Dorsolateral prefrontal cortex (tissue), 120 donors: ENCODE measurements at regions of chr19 and their contacts with region 1.

Region 1: DNA sequence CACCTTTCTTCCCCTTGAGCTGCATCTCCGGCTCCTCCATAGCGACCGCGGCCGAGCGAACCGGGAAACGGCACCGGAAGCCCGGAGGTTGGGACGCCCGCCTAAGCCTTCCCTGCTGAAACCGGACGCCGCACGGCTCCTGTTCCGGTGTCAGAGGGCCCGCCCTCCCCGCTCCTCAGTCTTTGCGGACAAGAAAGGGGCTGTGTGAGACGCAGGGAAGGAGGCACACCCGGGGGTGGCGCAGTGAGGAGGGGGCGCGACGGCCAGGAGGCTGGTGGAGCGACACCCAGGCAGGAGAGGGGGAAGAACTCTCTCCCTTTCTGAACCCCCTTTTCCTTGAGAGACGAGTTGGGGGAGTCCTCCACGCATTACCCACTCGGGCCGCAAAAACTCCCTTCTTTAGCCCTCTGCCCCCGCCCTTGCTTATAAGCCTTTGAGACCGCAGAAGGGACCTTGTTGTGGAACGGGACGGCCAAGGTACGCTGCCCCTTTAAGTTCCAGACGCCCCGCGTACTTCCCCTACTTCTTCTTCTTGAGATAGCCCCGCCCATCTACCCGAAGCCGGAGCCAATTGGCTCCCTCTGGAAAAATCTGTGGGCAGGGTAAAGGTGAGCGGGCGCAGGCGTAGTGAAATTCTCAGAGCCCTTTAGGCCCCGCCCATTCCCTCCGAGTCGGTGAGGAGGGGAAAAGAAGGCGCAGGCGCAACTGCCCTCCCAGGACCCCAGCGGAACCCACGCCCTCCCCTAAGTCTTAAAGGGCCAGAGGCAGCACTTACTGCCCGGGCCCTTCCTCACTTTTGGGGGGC is at the starts of genes BORCS8 and RFXANK:
- DNase-seq: peak; percentile 96 to 99 (median 98)
- H3K4me3 ChIP-seq: peak within 1 kb of the TSS; percentile 66 to 100 (median 96)
- H3K27ac ChIP-seq: peak within 1 kb of the TSS; percentile 91 to 100 (median 98)
- H3K27me3 ChIP-seq: no peaks in the 10 kb centered on the region
- CTCF ChIP-seq: peak in 16 of 56 donors; percentile 1 to 32 (median 12)
- total RNA-seq, gene BORCS8: 28.1 to 68.0 (median 47.0) TPM
- total RNA-seq, gene RFXANK: 25.2 to 73.9 (median 38.1) TPM

Region 2: DNA sequence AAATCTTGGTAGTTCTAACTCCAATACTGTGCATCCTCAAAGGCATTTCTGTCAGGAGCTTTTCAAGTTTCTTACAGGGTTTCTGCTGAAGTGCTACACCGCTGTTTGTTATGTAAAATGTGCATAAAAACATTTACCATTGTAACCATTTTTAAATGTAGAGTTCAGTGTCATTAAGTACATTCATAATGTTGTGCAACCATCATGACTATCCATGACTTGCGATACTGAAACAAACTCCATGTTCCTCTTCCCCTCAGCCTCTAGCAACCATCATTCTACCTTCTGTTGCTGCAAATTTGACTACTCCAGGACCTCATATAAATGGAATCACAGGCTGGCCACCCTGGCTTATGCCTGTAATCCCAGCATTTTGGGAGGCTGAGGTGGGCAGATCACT is 142.9 kb before region 1 on chr19:
- intact Hi-C with region 1: no loop called
- DNase-seq: no peak
- H3K4me3 ChIP-seq: no peak overlapping the region
- H3K27ac ChIP-seq: no peak overlapping the region
- H3K27me3 ChIP-seq: no peaks in the 10 kb centered on the region
- CTCF ChIP-seq: no peak

Region 3: DNA sequence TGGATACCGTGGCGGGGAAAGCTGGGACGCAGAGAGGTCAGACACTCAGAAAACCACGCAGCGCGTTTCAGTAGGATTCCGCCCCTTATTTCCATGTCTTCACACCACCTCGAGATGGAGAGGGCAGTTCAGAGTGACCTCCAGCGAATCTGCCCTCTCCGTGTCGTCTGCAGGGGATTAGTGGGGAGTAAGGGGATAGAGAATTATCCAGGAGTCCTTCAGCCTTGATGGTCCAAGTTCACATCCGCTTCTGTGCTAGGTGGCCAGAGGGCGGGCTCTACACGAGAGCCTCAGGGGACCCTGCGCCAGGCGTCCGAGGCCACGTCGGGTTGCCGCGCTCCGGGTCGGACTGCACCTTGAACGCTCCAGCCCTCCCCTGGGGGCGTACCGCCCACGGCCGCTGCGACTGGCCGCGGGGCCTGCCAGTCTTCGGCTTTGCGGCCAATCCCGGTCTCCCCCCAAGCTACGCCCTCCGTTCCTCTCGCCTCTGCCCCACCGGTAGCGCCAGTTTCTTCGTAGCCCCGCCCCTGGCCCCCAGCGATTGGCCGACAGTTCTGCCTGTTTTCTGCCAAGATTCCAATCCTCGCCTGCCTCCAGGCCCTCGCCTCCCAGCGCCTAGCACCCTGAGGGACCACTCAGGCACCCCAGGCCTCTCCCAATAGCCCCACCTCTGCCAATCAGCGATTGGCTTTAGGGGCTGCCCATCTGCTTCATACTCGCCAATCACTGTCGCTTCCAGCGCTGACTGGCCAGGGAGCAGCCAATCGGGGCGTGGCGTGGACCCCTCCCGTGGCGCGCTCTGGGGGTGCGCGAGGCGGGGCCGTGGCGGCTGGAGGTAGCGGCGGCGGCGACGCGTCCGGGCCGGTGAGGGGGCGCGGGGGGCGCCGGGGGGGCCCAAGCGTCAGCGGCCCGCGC is 128.8 kb before region 1 on chr19 and contains the start of gene SLC25A42:
- intact Hi-C with region 1: loop called in 1 of 2 experiments (anchors 5 kb)
- DNase-seq: peak; percentile 98 to 100 (median 100)
- H3K4me3 ChIP-seq: peak within 1 kb of the TSS; percentile 58 to 98 (median 82)
- H3K27ac ChIP-seq: peak within 1 kb of the TSS in 57 of 59 donors; percentile 8 to 94 (median 87)
- H3K27me3 ChIP-seq: no peaks in the 10 kb centered on the region
- CTCF ChIP-seq: peak in 15 of 56 donors; percentile 4 to 39 (median 11)
- total RNA-seq, gene SLC25A42: 17.0 to 52.0 (median 27.3) TPM

Region 4: DNA sequence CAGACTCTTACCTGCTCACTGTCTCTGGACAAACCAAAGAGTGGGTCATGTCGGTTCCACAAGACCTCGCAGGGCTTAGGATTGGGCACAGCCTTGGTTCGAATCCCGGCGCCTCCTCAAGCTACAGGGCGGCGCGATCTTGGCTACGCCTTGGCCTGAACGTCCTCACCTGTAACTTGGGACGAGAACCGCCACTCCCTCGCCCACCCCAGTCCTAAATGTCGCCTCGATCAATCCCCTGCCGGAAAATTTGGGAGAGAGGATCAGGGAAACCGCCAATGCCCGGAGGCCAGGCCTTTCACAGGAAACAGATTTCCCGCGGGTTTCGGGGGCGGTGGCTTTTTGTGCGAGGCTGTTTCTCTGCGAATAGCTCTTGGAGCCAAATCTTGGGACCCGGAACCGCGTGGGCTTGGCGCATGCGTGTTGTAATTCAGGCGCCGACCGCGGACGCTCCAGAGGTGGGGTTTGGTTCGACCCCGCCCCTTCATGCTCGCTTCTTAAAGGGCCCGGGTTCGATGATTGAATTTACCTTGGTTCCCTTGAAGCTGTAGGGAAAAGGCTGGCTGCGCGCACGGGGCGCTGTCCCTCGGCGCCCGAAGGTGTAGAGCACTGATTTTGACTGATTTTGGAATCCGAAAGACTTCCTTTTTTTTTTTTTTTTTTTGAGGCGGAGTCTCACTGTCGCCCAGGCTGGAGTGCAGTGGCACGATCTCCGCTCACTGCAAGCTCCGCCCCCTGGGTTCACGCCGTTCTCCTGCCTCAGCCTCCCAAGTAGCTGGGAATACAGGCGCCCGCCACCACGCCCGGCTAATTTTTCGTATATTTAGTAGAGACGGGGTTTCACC is 11.0 kb after region 1 on chr19 and contains the start of gene NR2C2AP:
- intact Hi-C with region 1: loop called in 1 of 2 experiments (anchors 1 kb)
- DNase-seq: peak; percentile 89 to 94 (median 92)
- H3K4me3 ChIP-seq: peak within 1 kb of the TSS; percentile 52 to 89 (median 75)
- H3K27ac ChIP-seq: peak within 1 kb of the TSS in 55 of 59 donors; percentile 37 to 88 (median 75)
- H3K27me3 ChIP-seq: peaks cover 0 to 3% (median 0%) of the 10 kb centered on the region in 45 donors
- CTCF ChIP-seq: peak in 16 of 56 donors; percentile 8 to 35 (median 16)
- total RNA-seq, gene NR2C2AP: 6.3 to 17.2 (median 11.1) TPM

Region 5: DNA sequence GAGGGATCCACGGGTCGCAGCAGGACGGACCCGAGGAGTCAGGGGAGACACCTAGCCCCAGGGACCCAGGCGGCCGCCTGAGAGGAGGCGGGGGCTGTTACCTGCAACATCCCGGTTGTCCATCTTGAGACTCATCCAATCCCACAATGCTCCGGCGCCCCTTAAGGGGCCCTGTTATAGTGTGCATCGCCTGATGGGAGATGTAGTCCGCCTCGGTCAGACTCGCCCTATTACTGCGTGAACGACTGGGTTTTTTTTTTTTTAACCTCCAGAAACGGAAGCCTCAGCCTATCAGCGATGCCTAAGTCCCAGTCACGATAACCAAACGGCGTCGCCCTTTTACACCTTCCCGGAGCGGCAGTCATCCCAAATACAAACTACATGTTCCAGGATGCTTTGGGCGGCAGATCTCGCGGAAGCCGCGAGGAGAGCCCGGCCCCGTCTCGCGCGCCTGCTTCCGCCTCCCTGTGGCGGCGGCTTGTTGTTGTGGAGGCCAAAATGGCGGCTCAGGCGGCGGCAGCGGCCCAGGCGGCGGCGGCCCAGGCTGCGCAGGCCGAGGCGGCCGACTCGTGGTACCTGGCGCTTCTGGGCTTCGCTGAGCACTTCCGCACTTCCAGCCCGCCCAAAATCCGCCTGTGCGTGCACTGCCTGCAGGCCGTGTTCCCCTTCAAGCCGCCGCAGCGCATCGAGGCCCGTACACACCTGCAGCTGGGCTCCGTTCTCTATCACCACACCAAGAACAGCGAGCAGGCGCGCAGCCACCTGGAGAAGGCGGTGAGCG is 128.3 kb after region 1 on chr19 and contains the starts of genes MAU2 and SUGP1:
- intact Hi-C with region 1: loop called (anchors 2 to 5 kb)
- DNase-seq: peak; percentile 77 to 94 (median 90)
- H3K4me3 ChIP-seq: peak within 1 kb of the TSS; percentile 62 to 100 (median 97)
- H3K27ac ChIP-seq: peak within 1 kb of the TSS; percentile 53 to 99 (median 95)
- H3K27me3 ChIP-seq: no peaks in the 10 kb centered on the region
- CTCF ChIP-seq: peak in 53 of 56 donors; percentile 10 to 73 (median 52)
- total RNA-seq, gene MAU2: 58.7 to 162 (median 91.5) TPM
- total RNA-seq, gene SUGP1: 50.9 to 97.4 (median 73.0) TPM

Region 6: DNA sequence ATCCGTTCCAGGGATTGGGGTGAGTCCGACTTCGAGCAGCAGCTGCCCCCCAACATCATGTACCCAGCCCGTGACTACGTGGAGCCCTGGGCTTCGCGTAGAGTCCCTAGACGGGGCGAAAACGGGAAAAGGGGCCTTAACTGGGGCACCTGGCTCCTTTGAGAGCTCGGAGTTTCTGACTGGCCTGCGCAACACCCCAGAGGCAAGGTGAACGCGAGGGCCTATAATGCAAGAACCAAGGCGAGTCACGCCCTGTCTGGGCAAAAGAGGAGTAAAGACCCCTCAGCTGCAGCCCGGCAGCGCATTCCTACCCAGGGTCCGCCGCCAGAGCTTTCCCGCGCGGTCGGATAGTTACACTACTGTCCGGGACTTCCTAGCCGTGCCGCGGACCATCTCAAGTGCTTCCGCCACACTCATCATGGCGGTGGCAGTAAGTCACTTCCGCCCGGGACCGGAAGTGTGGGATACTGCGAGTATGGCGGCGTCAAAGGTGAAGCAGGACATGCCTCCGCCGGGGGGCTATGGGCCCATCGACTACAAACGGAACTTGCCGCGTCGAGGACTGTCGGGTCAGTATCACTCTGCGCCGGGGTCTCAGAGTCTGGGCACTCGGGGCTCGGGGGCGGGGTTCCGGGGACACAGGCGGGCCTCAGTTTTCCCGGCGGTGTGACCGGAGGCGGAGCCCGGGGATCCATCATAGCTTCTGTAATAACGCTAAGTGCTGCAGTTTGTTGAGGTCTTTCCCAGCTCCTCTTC is 323.7 kb after region 1 on chr19 and contains the start of gene NDUFA13:
- intact Hi-C with region 1: loop called in 1 of 2 experiments (anchors 5 kb)
- DNase-seq: peak; percentile 87 to 95 (median 93)
- H3K4me3 ChIP-seq: peak within 1 kb of the TSS; percentile 55 to 99 (median 86)
- H3K27ac ChIP-seq: peak within 1 kb of the TSS; percentile 18 to 94 (median 87)
- H3K27me3 ChIP-seq: no peaks in the 10 kb centered on the region
- CTCF ChIP-seq: peak in 27 of 56 donors; percentile 4 to 51 (median 24)
- total RNA-seq, gene NDUFA13: 270 to 471 (median 352) TPM